ENCODE measurements at regions of chr22 and their contacts with region 1.

Region 1: GRCh38 chr22:41403532-41404318 is 22.0 kb downstream of the TEF start:
- DNase-seq: peak; percentile 96
- H3K4me3 Mint-ChIP-seq: no peak overlapping the region
- H3K27ac Mint-ChIP-seq: peak overlapping the region; percentile 23
- H3K4me1 Mint-ChIP-seq: peaks cover 11% of the 10 kb centered on the region
- H3K27me3 Mint-ChIP-seq: no peaks in the 10 kb centered on the region

Region 2: GRCh38 chr22:41425660-41426365 is 22.1 kb after region 1 on chr22:
- intact Hi-C with region 1: no loop called
- DNase-seq: peak; percentile 82
- H3K4me3 Mint-ChIP-seq: peak overlapping the region; percentile 14
- H3K27ac Mint-ChIP-seq: peak overlapping the region; percentile 74
- H3K4me1 Mint-ChIP-seq: peaks cover 13% of the 10 kb centered on the region
- H3K27me3 Mint-ChIP-seq: no peaks in the 10 kb centered on the region

Region 3: GRCh38 chr22:41517172-41518047 is 113.7 kb after region 1 on chr22:
- intact Hi-C with region 1: loop called (anchors 1 kb)
- DNase-seq: peak; percentile 78
- H3K4me3 Mint-ChIP-seq: no peak overlapping the region
- H3K27ac Mint-ChIP-seq: no peak overlapping the region
- H3K4me1 Mint-ChIP-seq: peaks cover 5% of the 10 kb centered on the region
- H3K27me3 Mint-ChIP-seq: no peaks in the 10 kb centered on the region

Region 4: GRCh38 chr22:41526837-41527799 is 123.4 kb after region 1 on chr22:
- intact Hi-C with region 1: loop called (anchors 1 kb)
- DNase-seq: peak; percentile 90
- H3K4me3 Mint-ChIP-seq: no peak overlapping the region
- H3K27ac Mint-ChIP-seq: peak overlapping the region; percentile 28
- H3K4me1 Mint-ChIP-seq: peaks cover 10% of the 10 kb centered on the region
- H3K27me3 Mint-ChIP-seq: no peaks in the 10 kb centered on the region